HAP-1 (cell line): ENCODE measurements at regions of chr1 and their contacts with region 1.

Region 1: GRCh38 chr1:209860293-209860881 is 32.6 kb downstream of the UTP25 start:
- DNase-seq: peak; percentile 68 to 87
- H3K4me3 ChIP-seq: no peak overlapping the region
- H3K4me1 ChIP-seq: peaks cover 6% of the 10 kb centered on the region; the same call in 1 of the 2 replicates
- H3K27me3 ChIP-seq: no peaks in the 10 kb centered on the region

Region 2: DNA sequence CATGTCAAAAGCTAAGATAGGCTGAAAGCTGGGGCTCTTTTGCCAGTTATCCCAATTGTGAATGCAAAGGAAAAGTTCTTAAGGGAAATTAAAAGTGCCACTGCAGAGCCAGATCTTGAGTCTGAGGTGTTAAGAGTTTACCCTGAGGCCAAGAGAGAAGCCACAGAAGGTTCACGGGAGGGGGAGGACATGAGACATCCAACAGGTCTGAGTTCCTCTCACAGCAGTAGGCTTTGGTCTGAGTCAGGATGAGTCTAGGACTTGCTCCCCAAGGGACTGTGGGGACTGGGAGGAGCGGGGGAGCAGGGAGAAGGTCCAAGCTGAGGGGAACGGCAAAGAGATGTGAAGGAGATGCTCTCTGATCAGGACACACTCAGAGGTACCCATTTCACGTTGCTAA is 688.1 kb before region 1 on chr1:
- in situ Hi-C with region 1: no loop called
- DNase-seq: no peak
- H3K4me3 ChIP-seq: no peak overlapping the region
- H3K4me1 ChIP-seq: no peaks in the 10 kb centered on the region
- H3K27me3 ChIP-seq: no peaks in the 10 kb centered on the region

Region 3: GRCh38 chr1:209989525-209989924 is 129.1 kb after region 1 on chr1:
- in situ Hi-C with region 1: loop called (anchors 10 kb)
- DNase-seq: peak in 1 of 2 experiments; percentile 21
- H3K4me3 ChIP-seq: no peak overlapping the region
- H3K4me1 ChIP-seq: no peaks in the 10 kb centered on the region
- H3K27me3 ChIP-seq: peaks cover 20% of the 10 kb centered on the region

Region 4: DNA sequence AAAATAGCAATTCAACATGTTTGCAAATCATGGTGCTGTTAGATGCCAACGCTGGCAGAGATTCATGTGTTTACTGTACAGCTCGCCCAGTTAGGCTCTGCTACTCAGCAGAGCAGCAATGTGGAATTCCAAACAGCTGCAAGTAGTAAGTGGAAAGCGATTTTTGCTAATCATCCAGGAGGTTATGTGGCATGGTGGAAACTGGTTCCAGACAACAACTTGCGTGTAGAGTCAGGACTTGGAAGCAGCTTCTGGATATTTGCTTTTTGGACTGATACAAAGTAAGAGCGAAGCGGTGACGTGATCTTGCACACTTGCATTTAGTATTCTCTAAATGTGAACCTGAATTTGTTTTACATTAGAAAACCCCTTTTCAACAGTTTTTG is 441.2 kb after region 1 on chr1:
- in situ Hi-C with region 1: loop called (anchors 25 kb)
- DNase-seq: no peak
- H3K4me3 ChIP-seq: no peak overlapping the region
- H3K4me1 ChIP-seq: peaks cover 24% of the 10 kb centered on the region
- H3K27me3 ChIP-seq: no peaks in the 10 kb centered on the region